GM10248 (cell line): ENCODE measurements at regions of chr2 and their contacts with region 1.

Region 1: DNA sequence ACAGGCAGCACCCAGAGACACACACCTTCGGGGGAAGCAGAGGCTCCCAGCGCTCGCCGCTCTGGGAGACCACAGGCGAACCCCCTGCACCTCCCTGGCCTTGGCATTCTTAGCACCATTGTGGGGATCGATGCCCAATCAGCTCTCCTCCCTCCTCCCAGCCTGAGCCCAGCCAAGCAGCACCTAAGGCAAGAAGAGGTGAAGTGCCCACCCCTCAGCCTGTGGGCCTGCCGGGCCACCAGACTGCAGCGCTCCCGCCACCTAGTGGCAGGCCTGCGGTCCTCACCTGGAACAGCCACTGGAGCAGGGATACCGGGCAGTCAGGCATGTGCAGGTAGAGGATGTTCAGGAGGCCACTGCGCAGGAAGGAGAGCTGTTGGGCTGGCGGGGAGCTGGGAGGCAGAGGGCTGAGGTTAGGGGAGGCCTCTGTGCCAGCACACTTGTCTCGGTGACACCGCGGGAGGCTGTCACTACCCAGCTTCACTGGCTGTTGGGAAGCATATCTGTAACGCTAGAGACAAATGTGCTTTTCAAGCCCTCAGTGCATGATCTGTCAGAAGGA is 35.2 kb downstream of the FAM178B start:
- DNase-seq: peak; percentile 85
- CTCF ChIP-seq: peak; percentile 98

Region 2: DNA sequence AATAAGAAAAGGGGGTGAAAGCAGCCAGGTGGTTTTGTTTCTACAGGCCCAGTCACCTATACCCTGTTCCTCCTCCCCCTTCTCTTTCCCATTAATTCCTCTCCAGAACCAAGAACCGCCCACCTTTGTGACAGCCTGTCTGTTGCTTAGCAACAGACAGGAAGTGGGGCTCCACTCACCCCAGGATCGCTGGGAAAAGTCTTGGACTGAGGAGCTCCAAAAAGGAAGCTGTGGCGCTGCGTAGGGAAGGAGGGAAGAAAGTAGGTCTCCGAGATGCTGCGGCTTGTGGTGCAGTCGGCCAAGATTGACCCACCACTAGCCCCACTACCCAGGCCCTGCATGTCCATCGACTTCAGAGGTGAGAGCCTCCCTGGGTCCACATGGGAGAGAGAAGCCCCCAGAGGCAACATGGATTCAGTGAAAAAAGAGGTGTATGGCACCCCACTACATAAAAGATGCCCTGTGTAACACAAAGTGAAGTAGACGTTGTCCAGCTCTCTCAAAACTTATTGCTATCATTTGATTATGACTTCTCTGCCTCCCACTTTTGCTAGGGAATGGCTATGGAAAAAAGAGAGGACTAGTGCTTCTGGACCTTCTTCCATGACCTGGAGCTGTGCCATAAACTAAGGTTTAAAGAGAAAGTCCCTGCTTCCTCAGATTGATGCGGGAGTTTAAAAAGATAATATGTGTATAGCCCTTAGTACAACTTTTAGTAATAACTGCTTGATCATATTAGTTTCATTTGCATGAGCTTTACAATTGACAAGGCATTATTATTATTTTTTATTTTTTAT is 308.4 kb before region 1 on chr2 and contains the start of gene FER1L5:
- CTCF ChIA-PET with region 1: no interaction called
- POLR2A ChIA-PET with region 1: no interaction called
- DNase-seq: no peak
- CTCF ChIP-seq: no peak

Region 3: DNA sequence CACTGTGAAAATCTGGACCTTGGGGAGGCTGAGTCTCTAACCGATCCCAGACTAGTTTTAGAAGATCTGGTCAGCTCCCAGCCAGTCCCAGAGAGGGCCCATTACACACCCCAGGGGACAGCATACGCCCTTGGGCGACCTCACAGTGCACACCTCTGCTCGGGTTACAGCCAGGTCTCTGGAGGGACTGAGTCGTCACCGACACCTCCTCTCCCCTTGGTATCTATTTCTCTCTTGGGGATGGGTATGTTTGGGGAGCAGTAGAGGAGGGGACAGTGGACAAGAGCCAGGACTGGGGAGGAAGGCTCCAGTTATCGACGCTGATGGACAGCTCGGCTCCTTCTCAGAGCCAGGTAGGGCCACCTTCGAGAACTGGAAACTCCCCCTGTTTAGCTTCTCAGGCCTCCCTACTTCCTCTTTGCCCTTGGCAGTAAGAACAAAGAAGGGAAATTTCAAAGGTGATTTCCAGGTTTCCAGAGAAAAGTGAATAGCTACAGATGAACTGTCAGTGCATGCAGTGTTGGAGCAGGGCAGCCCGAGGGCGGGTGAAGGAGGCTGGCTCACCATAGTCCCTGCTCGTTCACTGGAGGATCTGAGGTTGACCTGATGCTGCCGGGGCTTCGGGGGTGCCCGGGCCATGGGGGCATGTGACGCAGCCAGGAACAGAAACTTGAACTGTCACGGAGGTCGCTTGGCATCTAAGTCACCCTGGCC is 76.9 kb before region 1 on chr2:
- CTCF ChIA-PET with region 1: interaction called, 19 read pairs
- POLR2A ChIA-PET with region 1: no interaction called
- DNase-seq: peak; percentile 61
- CTCF ChIP-seq: no peak

Region 4: GRCh38 chr2:96940001-96940615 is 11.1 kb before region 1 on chr2:
- CTCF ChIA-PET with region 1: interaction called, 24 read pairs
- POLR2A ChIA-PET with region 1: no interaction called
- DNase-seq: no peak
- CTCF ChIP-seq: no peak